ENCODE measurements at regions of chr11 and their contacts with region 1.

Region 1: DNA sequence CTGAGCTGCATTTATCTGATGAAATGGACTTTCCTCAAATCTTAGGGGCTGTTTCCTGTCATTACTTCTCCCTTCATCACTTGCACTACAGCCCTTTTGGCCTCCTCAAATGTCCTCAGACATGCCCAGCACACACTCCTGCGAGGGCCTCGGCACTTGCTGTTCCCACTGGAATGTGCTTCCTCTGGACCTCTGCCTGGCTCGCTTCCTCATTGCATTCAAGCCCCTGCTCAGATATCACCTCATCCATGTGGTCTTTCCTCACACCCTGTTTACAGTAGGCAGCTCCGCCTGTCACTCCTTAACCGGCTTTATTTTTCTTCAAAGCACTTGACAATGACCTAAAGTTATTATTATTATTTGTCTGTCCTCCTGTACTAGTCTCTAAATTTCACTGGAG is 9.0 kb downstream of the NAT10 start:
- DNase-seq: no peak
- H3K4me3 ChIP-seq: no peak overlapping the region
- H3K27ac ChIP-seq: no peak overlapping the region
- H3K4me1 ChIP-seq: no peaks in the 10 kb centered on the region
- H3K27me3 ChIP-seq: no peaks in the 10 kb centered on the region
- CTCF ChIP-seq: no peak

Region 2: DNA sequence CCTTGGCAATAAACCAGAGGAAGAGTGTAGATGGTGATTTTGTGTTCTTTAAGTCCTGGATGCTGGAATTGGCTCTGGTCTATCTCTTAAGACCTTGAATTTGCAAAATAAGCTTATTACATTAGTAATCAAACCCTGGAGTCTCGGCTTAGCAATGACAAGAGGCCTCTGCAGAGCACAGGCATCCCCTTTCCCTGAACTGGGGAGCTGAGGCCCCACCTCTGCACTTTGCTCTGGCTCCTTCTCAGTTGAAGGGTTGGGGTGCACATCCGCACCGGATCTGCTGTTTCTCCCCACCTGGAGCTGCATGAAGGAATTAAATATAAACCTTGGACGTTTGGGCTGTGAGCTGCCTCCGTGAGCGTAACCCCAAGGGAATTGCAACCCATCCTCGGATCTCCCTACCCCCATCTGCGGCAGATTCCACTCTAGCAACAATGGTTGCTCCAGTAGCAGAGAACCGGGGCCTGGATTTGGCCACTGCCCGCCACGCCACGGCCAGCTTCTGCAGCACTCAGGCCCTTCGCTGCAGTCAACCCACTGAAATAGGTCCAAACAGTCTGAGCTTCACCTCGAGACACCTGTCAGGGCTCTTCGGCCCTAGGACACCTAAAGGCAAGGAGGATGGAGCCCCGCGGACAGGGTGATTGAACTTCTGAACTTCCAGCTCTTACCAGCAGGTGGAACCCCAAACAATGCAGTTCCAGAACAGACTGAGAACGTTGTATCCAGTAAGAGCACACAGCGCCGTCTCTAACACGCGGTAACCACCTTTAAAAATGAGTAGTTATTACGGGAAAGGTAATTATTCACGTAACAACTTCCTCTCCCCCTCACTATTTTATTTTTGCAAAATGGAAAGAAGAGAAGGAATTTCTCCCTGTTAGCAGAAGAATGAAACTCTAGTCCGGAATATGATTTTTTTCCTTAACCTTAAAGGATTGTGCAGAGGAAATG is 117.7 kb before region 1 on chr11:
- intact Hi-C with region 1: loop called (anchors 5 kb)
- DNase-seq: peak; percentile 71 to 72
- H3K4me3 ChIP-seq: no peak overlapping the region
- H3K27ac ChIP-seq: no peak overlapping the region
- H3K4me1 ChIP-seq: peaks cover 0 to 7% (median 3%) of the 10 kb centered on the region in 4 donors
- H3K27me3 ChIP-seq: peaks cover 0 to 3% of the 10 kb centered on the region in 2 donors
- CTCF ChIP-seq: peak; percentile 77 to 84

Region 3: DNA sequence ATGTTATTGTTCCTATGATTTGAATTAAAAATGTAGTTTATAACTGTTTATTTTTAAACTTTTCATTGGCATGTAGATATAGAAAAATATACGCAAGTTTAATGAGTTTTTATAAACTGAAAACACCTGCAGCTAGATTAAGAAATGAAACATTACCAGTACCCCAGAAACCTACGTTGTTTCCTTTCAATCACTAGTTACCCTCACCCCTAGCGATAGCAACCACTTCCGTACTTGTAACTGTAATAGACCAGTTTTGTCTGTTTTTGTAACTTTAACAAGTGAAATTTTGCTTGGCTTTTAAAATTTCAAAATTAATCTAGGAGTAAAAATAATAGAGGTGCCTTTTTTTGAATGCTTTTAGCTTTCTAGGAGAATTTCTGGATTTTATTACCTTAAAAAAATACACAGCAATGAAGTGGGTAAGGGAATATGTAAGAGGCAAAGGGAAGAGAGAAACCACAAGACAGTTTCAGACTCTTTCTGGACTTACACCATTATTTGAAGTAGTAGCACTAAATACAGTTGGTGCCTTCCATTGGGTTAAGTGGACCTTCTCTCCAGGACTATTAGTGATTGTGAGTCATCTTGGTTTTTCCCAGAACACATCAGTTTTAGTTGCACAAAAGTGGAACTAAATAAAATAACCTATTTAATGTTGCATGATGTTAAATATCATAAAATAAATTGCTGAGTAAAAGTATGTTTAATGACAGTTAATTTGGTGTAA is 27.8 kb before region 1 on chr11:
- intact Hi-C with region 1: no loop called
- DNase-seq: no peak
- H3K4me3 ChIP-seq: no peak overlapping the region
- H3K27ac ChIP-seq: no peak overlapping the region
- H3K4me1 ChIP-seq: no peaks in the 10 kb centered on the region
- H3K27me3 ChIP-seq: no peaks in the 10 kb centered on the region
- CTCF ChIP-seq: no peak

Region 4: DNA sequence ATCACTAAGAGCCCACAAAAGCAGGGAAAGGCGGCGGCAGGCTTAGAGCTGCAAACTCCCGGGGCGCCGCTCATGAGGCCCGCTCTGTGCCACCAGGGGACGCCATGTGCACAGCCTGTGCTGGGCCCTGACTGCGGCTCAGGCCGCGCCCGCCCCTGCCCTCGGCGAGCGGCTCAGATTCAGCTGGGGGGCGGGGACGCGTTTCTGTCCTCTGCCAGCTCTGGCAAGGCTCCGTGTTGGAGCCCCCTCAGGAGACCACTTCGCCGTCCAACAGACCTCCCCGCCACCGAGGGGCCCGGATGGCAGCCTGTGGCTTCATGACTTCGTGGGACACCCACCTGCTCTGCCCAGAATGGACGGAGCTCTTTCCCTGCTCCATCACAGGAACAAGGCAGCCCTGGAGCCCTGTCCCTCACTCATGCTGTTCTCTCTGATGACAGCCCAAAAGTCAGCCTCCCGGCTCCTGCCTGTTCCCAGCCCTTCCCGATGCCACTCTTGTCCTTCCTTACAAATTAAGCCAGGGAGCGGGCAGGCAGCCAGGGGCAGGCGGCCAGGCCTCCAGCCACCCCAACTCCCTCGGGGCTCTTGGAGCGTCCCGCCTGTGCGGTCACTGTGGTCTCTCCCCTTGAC is 60.1 kb after region 1 on chr11:
- intact Hi-C with region 1: no loop called
- DNase-seq: peak; percentile 82 to 90
- H3K4me3 ChIP-seq: peak overlapping the region; percentile 26 to 47
- H3K27ac ChIP-seq: peak overlapping the region; percentile 33 to 54
- H3K4me1 ChIP-seq: peaks cover 0 to 13% (median 8%) of the 10 kb centered on the region in 4 donors
- H3K27me3 ChIP-seq: no peaks in the 10 kb centered on the region
- CTCF ChIP-seq: peak; percentile 97 to 98

Measured in tibial artery (tissue), 4 donors.